Pancreas (tissue), 10 donors: ENCODE measurements at regions of chr1 and their contacts with region 1.

Region 1: GRCh38 chr1:201229771-201230635 is 39.4 kb downstream of the IGFN1 start:
- DNase-seq: no peak
- ATAC-seq: no peak
- H3K4me3 ChIP-seq: no peak overlapping the region
- H3K27ac ChIP-seq: no peak overlapping the region
- H3K4me1 ChIP-seq: no peaks in the 10 kb centered on the region
- H3K27me3 ChIP-seq: no peaks in the 10 kb centered on the region
- CTCF ChIP-seq: no peak

Region 2: GRCh38 chr1:201085916-201086735 is 143.9 kb before region 1 on chr1:
- intact Hi-C with region 1: loop called in 1 of 3 experiments (anchors 10 kb)
- DNase-seq: peak; percentile 62 to 85 (median 78)
- ATAC-seq: peak; percentile 94 to 100 (median 98)
- H3K4me3 ChIP-seq: no peak overlapping the region
- H3K27ac ChIP-seq: no peak overlapping the region
- H3K4me1 ChIP-seq: no peaks in the 10 kb centered on the region
- H3K27me3 ChIP-seq: no peaks in the 10 kb centered on the region
- CTCF ChIP-seq: peak; percentile 44 to 57 (median 50)